PC-3 (cell line): ENCODE measurements at regions of chr17 and their contacts with region 1.

Region 1: DNA sequence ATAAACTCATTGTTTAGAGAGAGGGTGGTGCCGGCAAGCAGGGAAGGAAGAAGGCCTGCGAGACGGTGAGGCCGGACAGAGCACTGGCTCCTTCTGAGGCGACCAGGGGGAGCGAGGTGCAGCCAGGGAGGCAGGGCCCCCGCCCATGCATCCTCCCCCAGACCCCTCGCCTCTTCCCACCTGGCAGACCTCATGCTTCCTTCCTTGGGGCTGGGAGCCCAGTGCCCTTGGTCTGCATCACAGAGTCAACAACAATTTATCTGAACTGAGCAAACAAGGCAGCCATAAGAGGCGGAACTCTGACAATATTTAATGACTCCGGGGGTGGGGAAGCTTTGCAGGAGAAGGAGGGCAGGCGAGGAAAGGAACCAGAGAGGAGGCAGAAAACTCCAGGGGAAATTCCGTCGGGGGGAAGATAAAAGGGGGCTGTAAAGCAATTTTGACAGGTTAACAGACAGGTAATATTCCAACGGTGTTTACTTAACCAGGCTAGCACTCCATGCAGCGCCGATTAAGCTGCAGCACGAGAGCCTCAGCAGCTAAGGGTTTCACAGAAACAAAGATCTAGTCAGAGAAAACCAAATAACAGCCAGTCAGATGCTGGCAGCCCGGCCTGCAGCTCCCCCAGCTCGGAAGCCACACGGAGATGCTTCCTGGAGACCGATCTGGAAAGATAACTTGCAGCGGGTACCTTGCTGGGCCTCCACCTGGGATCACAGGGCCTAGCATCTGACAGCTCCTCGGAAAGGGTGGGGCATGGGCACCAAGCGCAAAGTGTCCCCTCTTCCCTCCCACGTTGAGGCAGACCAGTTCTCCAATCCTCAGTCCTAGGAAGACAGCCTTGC is 398.2 kb downstream of the SOX9 start:
- DNase-seq: peak; percentile 86
- ATAC-seq: peak; percentile 89
- H3K4me3 ChIP-seq: peak overlapping the region; percentile 50
- H3K27ac ChIP-seq: peak overlapping the region; percentile 79
- H3K4me1 ChIP-seq: peaks cover 30% of the 10 kb centered on the region
- H3K27me3 ChIP-seq: no peaks in the 10 kb centered on the region
- CTCF ChIP-seq: no peak

Region 2: DNA sequence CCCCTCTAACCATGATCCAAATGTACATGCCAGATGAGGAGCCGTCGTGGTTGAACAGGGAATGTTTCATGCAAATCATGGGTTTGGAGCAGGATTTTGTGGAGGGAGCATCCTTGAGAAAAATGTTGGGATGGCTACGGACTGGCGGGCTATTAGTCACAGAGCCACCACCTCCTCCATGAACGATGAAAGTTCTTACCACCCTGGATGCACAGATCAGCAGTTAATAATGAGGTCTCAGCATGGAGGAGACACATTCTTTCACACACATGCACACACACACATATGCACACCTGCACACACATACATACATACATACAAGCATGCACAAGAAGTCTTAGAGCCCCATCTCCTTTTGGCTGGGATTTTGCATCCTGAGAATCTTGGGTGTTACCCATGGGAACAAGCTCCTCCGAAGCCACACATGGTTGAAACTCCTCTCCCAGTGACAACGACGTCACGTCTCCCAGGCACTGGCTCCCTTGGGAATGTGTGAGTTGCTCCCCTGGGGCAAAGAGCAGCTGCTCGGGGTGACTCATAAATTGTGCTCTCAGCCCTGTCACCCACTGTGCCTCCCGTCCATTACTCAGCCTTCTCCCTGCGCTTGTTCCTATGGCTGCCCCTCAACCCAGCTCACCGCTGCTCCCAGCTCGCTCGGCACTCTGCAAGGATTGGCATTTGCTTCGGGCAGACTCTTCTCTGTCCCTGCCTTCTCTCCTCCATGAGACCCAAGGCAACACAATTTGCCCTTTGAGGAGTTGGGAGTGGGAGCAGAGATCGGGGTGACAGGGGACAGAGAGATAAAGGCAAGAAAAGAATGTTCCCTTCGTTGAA is 53.6 kb before region 1 on chr17:
- CTCF ChIA-PET with region 1: no interaction called
- POLR2A ChIA-PET with region 1: no interaction called
- intact Hi-C with region 1: loop called (anchors 1 kb)
- DNase-seq: peak; percentile 99
- ATAC-seq: peak; percentile 89
- H3K4me3 ChIP-seq: peak overlapping the region; percentile 66
- H3K27ac ChIP-seq: peak overlapping the region; percentile 96
- H3K4me1 ChIP-seq: peaks cover 54% of the 10 kb centered on the region
- H3K27me3 ChIP-seq: no peaks in the 10 kb centered on the region
- CTCF ChIP-seq: no peak

Region 3: DNA sequence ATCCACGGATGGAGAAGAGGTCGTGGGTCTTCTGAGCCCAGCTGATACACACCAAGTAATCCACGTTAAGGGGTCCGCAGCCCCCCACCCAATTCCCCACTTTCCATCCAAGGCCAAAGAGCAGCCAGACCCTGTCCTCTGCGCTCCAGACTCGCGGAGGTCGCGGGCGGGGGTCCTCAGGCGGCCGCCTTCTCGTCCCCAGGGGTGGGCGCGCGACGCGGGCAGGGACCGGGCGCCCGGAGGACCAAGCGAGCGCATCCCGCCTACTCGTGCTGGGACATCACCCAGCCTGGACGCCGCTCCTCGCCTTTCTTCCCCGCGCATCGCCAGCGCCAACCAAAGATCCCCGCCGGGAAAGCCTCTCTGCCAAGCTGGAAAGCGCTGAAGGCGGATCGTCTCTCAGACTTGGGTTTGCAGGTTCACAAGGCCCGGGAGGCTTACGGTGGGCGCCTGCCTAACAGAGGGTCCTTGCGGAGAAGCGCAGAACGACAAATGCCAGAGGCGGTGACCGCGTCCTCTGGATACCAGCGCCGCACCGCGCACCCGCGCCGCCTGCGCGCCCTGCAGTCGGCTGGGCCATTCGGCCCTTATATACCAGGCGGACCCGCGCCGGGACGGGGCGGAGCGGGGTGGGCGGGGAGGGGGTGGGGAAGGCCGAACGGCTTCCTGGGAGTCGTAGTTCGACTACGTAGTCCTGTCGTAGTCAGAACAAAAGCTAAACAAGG is 73.4 kb after region 1 on chr17:
- CTCF ChIA-PET with region 1: no interaction called
- POLR2A ChIA-PET with region 1: no interaction called
- intact Hi-C with region 1: no loop called
- DNase-seq: peak; percentile 95
- ATAC-seq: peak; percentile 66
- H3K4me3 ChIP-seq: peak overlapping the region; percentile 95
- H3K27ac ChIP-seq: peak overlapping the region; percentile 91
- H3K4me1 ChIP-seq: peaks cover 22% of the 10 kb centered on the region
- H3K27me3 ChIP-seq: no peaks in the 10 kb centered on the region
- CTCF ChIP-seq: no peak